Left lung (tissue), 14 donors: ENCODE measurements at regions of chr10 and their contacts with region 1.

Region 1: GRCh38 chr10:43671656-43672531 is 23.2 kb upstream of the ZNF32 start:
- DNase-seq: peak in 1 of 4 donors; percentile 71
- ATAC-seq: peak; percentile 94
- H3K4me3 ChIP-seq: no peak overlapping the region
- H3K27ac ChIP-seq: no peak overlapping the region
- H3K4me1 ChIP-seq: no peaks in the 10 kb centered on the region
- H3K27me3 ChIP-seq: peaks cover 12 to 34% of the 10 kb centered on the region in 2 donors
- CTCF ChIP-seq: peak; percentile 63 to 80

Region 2: GRCh38 chr10:43138021-43138756 is 533.7 kb before region 1 on chr10 and contains the start of gene CSGALNACT2:
- intact Hi-C with region 1: no loop called
- DNase-seq: peak; percentile 87 to 97 (median 90)
- ATAC-seq: peak; percentile 94
- H3K4me3 ChIP-seq: peak within 1 kb of the TSS; percentile 82 to 96
- H3K27ac ChIP-seq: peak within 1 kb of the TSS; percentile 96 to 97
- H3K4me1 ChIP-seq: peaks cover 25 to 58% of the 10 kb centered on the region in 2 donors
- H3K27me3 ChIP-seq: no peaks in the 10 kb centered on the region
- CTCF ChIP-seq: no peak
- polyA plus RNA-seq, gene CSGALNACT2: 31.4 to 45.0 (median 36.6) TPM

Region 3: DNA sequence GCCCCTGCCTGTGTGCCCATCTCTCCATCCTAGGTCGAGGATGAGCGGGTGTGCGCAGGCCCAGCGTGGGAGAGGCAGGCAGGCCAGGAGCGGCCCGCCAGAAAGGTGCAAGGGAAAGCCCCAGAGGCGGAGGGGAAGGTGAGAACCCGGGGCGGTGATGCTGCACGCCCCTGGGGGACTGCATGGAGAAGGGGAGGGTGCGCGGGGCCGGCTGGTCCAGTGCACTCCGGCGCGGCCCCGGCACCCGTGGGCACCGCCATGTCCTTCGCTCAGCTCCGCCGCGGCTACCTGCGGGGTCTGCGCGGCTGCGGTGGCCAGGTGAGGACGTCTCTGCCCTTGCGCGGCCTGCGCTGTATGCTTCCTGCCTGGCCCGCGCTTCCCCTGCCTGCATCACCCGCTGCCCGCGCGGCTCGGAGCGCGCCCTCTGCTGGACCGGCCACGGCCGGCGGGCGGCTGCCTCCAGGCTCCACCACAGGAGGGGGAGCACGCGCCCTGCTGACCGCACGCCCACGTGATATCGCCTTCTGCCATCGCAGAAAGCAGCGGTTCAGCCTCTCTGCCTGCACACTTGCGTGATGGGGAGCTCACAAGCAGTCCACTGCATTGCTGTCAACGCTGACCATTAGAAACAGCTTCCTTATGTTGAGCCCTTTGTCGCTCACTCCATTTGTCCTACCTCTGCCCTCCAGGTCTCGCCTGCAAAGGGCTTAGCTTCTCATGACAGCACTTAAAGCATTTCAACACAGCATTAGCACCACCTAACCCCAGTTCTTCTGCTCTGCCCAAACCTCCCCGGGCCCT is 639.1 kb after region 1 on chr10:
- intact Hi-C with region 1: loop called in 1 of 2 experiments (anchors 10 kb)
- DNase-seq: peak; percentile 76 to 94 (median 88)
- ATAC-seq: peak; percentile 100
- H3K4me3 ChIP-seq: peak overlapping the region; percentile 10 to 14
- H3K27ac ChIP-seq: peak overlapping the region in 1 of 2 donors; percentile 23
- H3K4me1 ChIP-seq: peaks cover 5 to 10% of the 10 kb centered on the region in 2 donors
- H3K27me3 ChIP-seq: peaks cover 0 to 10% of the 10 kb centered on the region in 2 donors
- CTCF ChIP-seq: peak; percentile 86 to 89

Region 4: DNA sequence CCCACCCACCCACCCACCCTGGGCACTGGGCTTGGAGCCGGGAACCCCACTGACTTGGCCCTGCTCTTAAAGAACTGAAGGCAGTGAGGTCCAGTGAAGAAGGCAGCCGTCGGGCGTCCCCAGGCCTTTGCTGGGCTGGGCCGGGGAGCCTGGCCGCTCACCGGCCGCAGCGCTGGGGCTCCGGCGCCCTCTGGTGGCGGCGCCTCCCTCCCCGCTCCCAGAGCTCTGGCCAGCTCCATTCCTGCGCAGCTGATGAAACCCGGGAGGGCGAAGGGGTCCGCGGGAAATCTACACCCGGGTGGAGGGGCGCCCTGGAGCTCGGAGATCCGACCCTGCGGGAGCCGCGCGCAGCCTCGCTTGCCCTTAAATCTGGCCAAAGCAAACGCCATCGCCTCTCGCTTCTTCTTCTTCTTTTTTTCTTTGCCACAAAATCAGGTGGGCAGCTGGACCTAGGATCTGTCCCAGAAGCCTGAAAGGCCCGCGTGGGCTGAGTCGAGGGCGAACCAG is 714.7 kb after region 1 on chr10:
- intact Hi-C with region 1: loop called in 1 of 2 experiments (anchors 5 kb)
- DNase-seq: peak; percentile 54 to 89 (median 78)
- ATAC-seq: peak; percentile 94
- H3K4me3 ChIP-seq: no peak overlapping the region
- H3K27ac ChIP-seq: no peak overlapping the region
- H3K4me1 ChIP-seq: peaks cover 6 to 22% of the 10 kb centered on the region in 2 donors
- H3K27me3 ChIP-seq: peaks cover 14 to 72% of the 10 kb centered on the region in 2 donors
- CTCF ChIP-seq: peak; percentile 83 to 86

Region 5: DNA sequence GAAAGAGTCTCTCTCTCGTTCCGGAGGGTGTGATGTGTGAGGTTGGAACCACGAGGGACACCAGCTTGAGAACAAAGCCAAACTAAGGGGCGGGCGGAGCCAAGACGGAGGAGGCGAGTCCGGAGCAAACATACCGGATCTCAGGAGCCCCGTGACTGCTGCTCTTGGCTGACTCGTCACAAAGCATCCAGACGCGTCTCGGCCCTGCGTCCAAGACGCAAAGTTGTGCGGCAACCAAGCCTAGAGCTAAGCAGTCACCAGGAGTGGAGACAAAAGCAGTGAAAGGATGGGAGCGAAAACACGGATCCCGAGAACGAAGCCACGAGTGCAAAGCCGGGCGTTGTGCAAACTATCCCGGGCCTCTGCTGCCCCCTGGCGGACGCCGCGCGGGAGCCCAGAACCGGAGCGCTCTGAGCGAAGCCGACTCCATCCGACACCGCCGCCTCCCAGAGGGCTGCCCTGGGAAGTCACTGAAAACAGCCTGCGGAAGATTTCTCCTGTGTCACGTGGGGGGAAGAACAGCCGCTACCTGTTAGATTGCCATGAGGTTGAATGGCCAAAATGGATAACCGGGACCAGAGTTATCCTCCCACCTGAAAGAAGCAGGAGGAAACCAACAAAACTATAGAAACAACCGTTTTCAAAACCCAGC is 1192.9 kb after region 1 on chr10:
- intact Hi-C with region 1: loop called in 1 of 2 experiments (anchors 10 kb)
- DNase-seq: peak; percentile 89 to 98 (median 90)
- ATAC-seq: peak; percentile 98
- H3K4me3 ChIP-seq: peak overlapping the region; percentile 42 to 47
- H3K27ac ChIP-seq: peak overlapping the region in 1 of 2 donors; percentile 70
- H3K4me1 ChIP-seq: peaks cover 10 to 22% of the 10 kb centered on the region in 2 donors
- H3K27me3 ChIP-seq: peaks cover 10 to 41% of the 10 kb centered on the region in 2 donors
- CTCF ChIP-seq: peak; percentile 95 to 98